Stomach (tissue), 19 donors: ENCODE measurements at regions of chr1 and their contacts with region 1.

Region 1: GRCh38 chr1:147177611-147178380 is 5.5 kb upstream of the PRKAB2 start:
- DNase-seq: peak in 1 of 2 donors; percentile 33
- H3K4me3 ChIP-seq: peak overlapping the region in 1 of 4 donors; percentile 20
- H3K27ac ChIP-seq: peak overlapping the region in 1 of 5 donors; percentile 5
- H3K4me1 ChIP-seq: peaks cover 0 to 17% (median 7%) of the 10 kb centered on the region in 4 donors
- H3K27me3 ChIP-seq: no peaks in the 10 kb centered on the region
- CTCF ChIP-seq: no peak
- EP300 ChIP-seq: no peak
- POLR2A ChIP-seq: no peak

Region 2: GRCh38 chr1:147142886-147143285 is 34.9 kb before region 1 on chr1:
- intact Hi-C with region 1: no loop called
- DNase-seq: no peak
- H3K4me3 ChIP-seq: no peak overlapping the region
- H3K27ac ChIP-seq: no peak overlapping the region
- H3K4me1 ChIP-seq: no peaks in the 10 kb centered on the region
- H3K27me3 ChIP-seq: no peaks in the 10 kb centered on the region
- CTCF ChIP-seq: no peak
- EP300 ChIP-seq: no peak
- POLR2A ChIP-seq: no peak

Region 3: GRCh38 chr1:147236959-147237826 is 59.4 kb after region 1 on chr1:
- intact Hi-C with region 1: loop called (anchors 5 kb)
- DNase-seq: peak; percentile 43 to 61
- H3K4me3 ChIP-seq: no peak overlapping the region
- H3K27ac ChIP-seq: peak overlapping the region; percentile 63 to 92 (median 85)
- H3K4me1 ChIP-seq: peaks cover 18 to 35% (median 30%) of the 10 kb centered on the region in 4 donors
- H3K27me3 ChIP-seq: no peaks in the 10 kb centered on the region
- CTCF ChIP-seq: no peak
- EP300 ChIP-seq: no peak
- POLR2A ChIP-seq: no peak